Activated CD4-positive, alpha-beta T cell treated with anti-CD3 and anti-CD28 coated beads for 36 hours (primary cell): ENCODE measurements at regions of chr1 and their contacts with region 1.

Region 1: DNA sequence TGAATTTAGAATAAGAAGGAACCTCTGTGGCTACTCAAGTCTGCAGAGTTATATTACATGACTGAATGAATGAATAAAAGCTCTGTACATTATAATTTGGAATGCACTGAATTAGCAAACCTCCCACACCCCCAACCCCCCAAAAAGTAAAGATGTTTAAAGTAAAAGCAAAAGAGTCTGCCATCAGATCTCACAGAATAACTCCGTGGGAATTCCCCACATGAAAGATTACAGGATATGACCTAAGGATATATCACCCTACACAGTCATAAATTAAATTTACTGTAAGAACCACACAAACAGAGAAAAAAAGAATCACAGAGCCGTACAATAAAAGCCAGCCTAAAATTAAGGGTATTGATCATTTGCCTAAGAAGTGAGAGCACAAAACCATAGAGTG is 587.3 kb downstream of the PTPRC start:
- DNase-seq: peak; percentile 53
- ATAC-seq: peak; percentile 98
- H3K4me3 Mint-ChIP-seq: peak overlapping the region; percentile 47
- H3K27ac Mint-ChIP-seq: peak overlapping the region; percentile 78
- H3K4me1 Mint-ChIP-seq: peaks cover 25% of the 10 kb centered on the region
- H3K27me3 Mint-ChIP-seq: no peaks in the 10 kb centered on the region

Region 2: DNA sequence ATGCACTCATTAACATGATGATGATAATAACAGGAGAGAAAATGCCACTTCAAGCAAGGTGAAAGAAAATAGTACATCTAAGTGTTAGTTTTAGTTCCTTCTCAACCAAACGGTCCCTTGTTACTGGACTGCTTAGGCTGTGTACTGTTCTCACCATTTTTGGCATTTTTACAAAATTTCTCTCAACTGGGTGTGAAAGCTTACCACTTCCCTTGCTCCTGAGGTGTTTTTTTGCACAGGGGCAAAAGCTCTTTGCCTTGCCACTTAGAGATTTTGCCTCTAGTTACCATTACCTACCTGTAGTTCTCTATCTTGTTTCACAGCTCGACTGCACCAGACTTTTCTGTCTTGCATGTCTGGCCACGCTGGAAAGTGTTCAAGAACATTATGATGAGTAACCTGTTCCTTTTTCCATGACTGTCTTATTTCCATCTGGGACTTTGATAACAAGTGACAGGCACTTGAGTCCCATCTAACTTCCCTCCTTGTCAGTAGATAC is 1058.7 kb before region 1 on chr1:
- CTCF ChIA-PET with region 1: no interaction called
- POLR2A ChIA-PET with region 1: no interaction called
- intact Hi-C with region 1: loop called in 1 of 2 experiments (anchors 5 kb)
- DNase-seq: peak; percentile 42
- ATAC-seq: peak; percentile 18
- H3K4me3 Mint-ChIP-seq: peak overlapping the region; percentile 54
- H3K27ac Mint-ChIP-seq: peak overlapping the region; percentile 93
- H3K4me1 Mint-ChIP-seq: peaks cover 93% of the 10 kb centered on the region
- H3K27me3 Mint-ChIP-seq: no peaks in the 10 kb centered on the region

Region 3: GRCh38 chr1:199163670-199164069 is 62.5 kb before region 1 on chr1:
- CTCF ChIA-PET with region 1: no interaction called
- POLR2A ChIA-PET with region 1: no interaction called
- intact Hi-C with region 1: loop called in 1 of 2 experiments (anchors 1 kb)
- DNase-seq: no peak
- ATAC-seq: peak; percentile 48
- H3K4me3 Mint-ChIP-seq: no peak overlapping the region
- H3K27ac Mint-ChIP-seq: no peak overlapping the region
- H3K4me1 Mint-ChIP-seq: peaks cover 37% of the 10 kb centered on the region
- H3K27me3 Mint-ChIP-seq: no peaks in the 10 kb centered on the region

Region 4: DNA sequence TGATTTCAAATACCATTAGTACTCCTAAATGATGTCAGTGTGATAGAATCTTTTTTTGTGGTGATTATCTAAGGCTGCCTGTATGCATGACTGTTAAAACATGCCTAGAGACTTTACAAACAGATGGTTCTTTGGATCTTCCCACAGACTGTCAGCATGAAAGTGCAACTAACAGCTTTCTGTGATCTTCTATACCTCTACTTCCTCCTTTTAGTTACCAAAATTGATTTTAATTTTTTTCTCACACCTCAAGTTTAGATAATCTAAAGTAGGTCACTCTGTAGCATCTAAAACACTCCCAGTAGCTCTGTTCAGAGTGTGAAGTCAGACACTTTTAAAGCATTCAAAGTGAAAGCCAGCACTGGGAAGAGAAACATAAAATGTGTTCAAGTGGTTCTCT is 52.8 kb before region 1 on chr1:
- CTCF ChIA-PET with region 1: interaction called, 8 read pairs
- POLR2A ChIA-PET with region 1: interaction called, 5 read pairs
- intact Hi-C with region 1: loop called (anchors 1 kb)
- DNase-seq: peak; percentile 11
- ATAC-seq: peak; percentile 89
- H3K4me3 Mint-ChIP-seq: no peak overlapping the region
- H3K27ac Mint-ChIP-seq: peak overlapping the region; percentile 39
- H3K4me1 Mint-ChIP-seq: peaks cover 58% of the 10 kb centered on the region
- H3K27me3 Mint-ChIP-seq: peaks cover 3% of the 10 kb centered on the region

Region 5: GRCh38 chr1:199308331-199308846 is 82.2 kb after region 1 on chr1:
- CTCF ChIA-PET with region 1: no interaction called
- POLR2A ChIA-PET with region 1: no interaction called
- intact Hi-C with region 1: loop called (anchors 1 kb)
- DNase-seq: peak; percentile 5
- ATAC-seq: peak; percentile 93
- H3K4me3 Mint-ChIP-seq: no peak overlapping the region
- H3K27ac Mint-ChIP-seq: peak overlapping the region; percentile 69
- H3K4me1 Mint-ChIP-seq: peaks cover 44% of the 10 kb centered on the region
- H3K27me3 Mint-ChIP-seq: peaks cover 25% of the 10 kb centered on the region